T-cell (primary cell): ENCODE measurements at regions of chr5 and their contacts with region 1.

Region 1: GRCh38 chr5:136166909-136167308 is 26.1 kb downstream of the SMIM32 start:
- DNase-seq: no peak
- ATAC-seq: no peak
- H3K4me3 ChIP-seq: no peak overlapping the region
- H3K4me3 Mint-ChIP-seq: no peak overlapping the region
- H3K27ac ChIP-seq: no peak overlapping the region
- H3K27ac Mint-ChIP-seq: no peak overlapping the region
- H3K4me1 ChIP-seq: no peaks in the 10 kb centered on the region
- H3K4me1 Mint-ChIP-seq: no peaks in the 10 kb centered on the region
- H3K27me3 ChIP-seq: no peaks in the 10 kb centered on the region
- H3K27me3 Mint-ChIP-seq: no peaks in the 10 kb centered on the region

Region 2: GRCh38 chr5:135457424-135458071 is 709.4 kb before region 1 on chr5:
- CTCF ChIA-PET with region 1: interaction called in 1 of 2 experiments, 10 read pairs
- POLR2A ChIA-PET with region 1: no interaction called
- DNase-seq: peak in 33 of 35 experiments; percentile 12 to 63 (median 37)
- ATAC-seq: peak; percentile 53 to 67 (median 62)
- H3K4me3 ChIP-seq: no peak overlapping the region
- H3K4me3 Mint-ChIP-seq: no peak overlapping the region
- H3K27ac ChIP-seq: no peak overlapping the region
- H3K27ac Mint-ChIP-seq: no peak overlapping the region
- H3K4me1 ChIP-seq: no peaks in the 10 kb centered on the region
- H3K4me1 Mint-ChIP-seq: peaks cover 0 to 5% (median 0%) of the 10 kb centered on the region in 3 donors
- H3K27me3 ChIP-seq: peaks cover 0 to 46% of the 10 kb centered on the region in 2 experiments
- H3K27me3 Mint-ChIP-seq: peaks cover 9 to 19% of the 10 kb centered on the region in 2 donors

Region 3: GRCh38 chr5:136152224-136152623 is 14.7 kb before region 1 on chr5:
- CTCF ChIA-PET with region 1: interaction called in 1 of 2 experiments, 11 read pairs
- POLR2A ChIA-PET with region 1: no interaction called
- DNase-seq: no peak
- ATAC-seq: no peak
- H3K4me3 ChIP-seq: no peak overlapping the region
- H3K4me3 Mint-ChIP-seq: no peak overlapping the region
- H3K27ac ChIP-seq: no peak overlapping the region
- H3K27ac Mint-ChIP-seq: no peak overlapping the region
- H3K4me1 ChIP-seq: no peaks in the 10 kb centered on the region
- H3K4me1 Mint-ChIP-seq: peaks cover 0 to 13% (median 4%) of the 10 kb centered on the region in 3 donors
- H3K27me3 ChIP-seq: no peaks in the 10 kb centered on the region
- H3K27me3 Mint-ChIP-seq: peaks cover 0 to 2% of the 10 kb centered on the region in 2 donors

Region 4: GRCh38 chr5:136192526-136193321 is 25.8 kb after region 1 on chr5 and contains the start of gene SMIM32:
- CTCF ChIA-PET with region 1: no interaction called
- POLR2A ChIA-PET with region 1: no interaction called
- DNase-seq: no peak
- ATAC-seq: no peak
- H3K4me3 ChIP-seq: no peak within 1 kb of the TSS
- H3K4me3 Mint-ChIP-seq: no peak within 1 kb of the TSS
- H3K27ac ChIP-seq: no peak within 1 kb of the TSS
- H3K27ac Mint-ChIP-seq: no peak within 1 kb of the TSS
- H3K4me1 ChIP-seq: peaks cover 0 to 4% of the 10 kb centered on the region in 2 experiments
- H3K4me1 Mint-ChIP-seq: peaks cover 0 to 4% (median 1%) of the 10 kb centered on the region in 3 donors
- H3K27me3 ChIP-seq: peaks cover 5 to 69% of the 10 kb centered on the region in 2 experiments
- H3K27me3 Mint-ChIP-seq: peaks cover 34 to 52% of the 10 kb centered on the region in 2 donors
- total RNA-seq, gene SMIM32: not detected

Region 5: DNA sequence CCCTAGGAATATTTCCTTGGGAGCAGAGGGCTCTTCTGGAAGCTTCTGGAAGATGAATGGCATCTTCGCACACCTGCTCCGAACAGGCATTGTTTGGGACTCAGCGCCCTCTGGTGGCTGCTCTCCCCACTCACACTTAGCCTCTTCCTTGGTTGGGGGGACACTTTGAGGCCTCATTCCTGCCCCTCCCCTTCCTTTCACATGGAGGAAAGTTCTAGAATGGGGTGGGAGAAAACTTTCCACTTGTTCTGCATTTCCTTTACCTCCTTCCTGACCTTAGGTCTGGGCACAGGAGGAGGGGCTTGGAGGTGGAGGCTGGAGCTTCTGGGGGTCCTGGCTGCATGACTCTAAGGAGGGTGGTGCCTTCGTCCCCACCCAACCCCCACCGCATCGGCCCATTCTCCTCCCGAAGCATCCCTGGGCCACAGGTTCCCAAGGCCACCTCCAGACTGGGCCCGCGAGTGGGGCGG is 45.4 kb after region 1 on chr5:
- CTCF ChIA-PET with region 1: no interaction called
- POLR2A ChIA-PET with region 1: no interaction called
- DNase-seq: peak in 25 of 35 experiments; percentile 4 to 57 (median 22)
- ATAC-seq: no peak
- H3K4me3 ChIP-seq: no peak overlapping the region
- H3K4me3 Mint-ChIP-seq: no peak overlapping the region
- H3K27ac ChIP-seq: no peak overlapping the region
- H3K27ac Mint-ChIP-seq: no peak overlapping the region
- H3K4me1 ChIP-seq: no peaks in the 10 kb centered on the region
- H3K4me1 Mint-ChIP-seq: no peaks in the 10 kb centered on the region
- H3K27me3 ChIP-seq: peaks cover 0 to 52% of the 10 kb centered on the region in 2 experiments
- H3K27me3 Mint-ChIP-seq: peaks cover 20 to 27% of the 10 kb centered on the region in 2 donors

Region 6: GRCh38 chr5:137136991-137137632 is 970.2 kb after region 1 on chr5:
- CTCF ChIA-PET with region 1: no interaction called
- POLR2A ChIA-PET with region 1: no interaction called
- DNase-seq: no peak
- ATAC-seq: no peak
- H3K4me3 ChIP-seq: no peak overlapping the region
- H3K4me3 Mint-ChIP-seq: no peak overlapping the region
- H3K27ac ChIP-seq: no peak overlapping the region
- H3K27ac Mint-ChIP-seq: no peak overlapping the region
- H3K4me1 ChIP-seq: no peaks in the 10 kb centered on the region
- H3K4me1 Mint-ChIP-seq: no peaks in the 10 kb centered on the region
- H3K27me3 ChIP-seq: no peaks in the 10 kb centered on the region
- H3K27me3 Mint-ChIP-seq: peaks cover 0 to 15% of the 10 kb centered on the region in 2 donors